A673 (cell line): ENCODE measurements at regions of chr20 and their contacts with region 1.

Region 1: DNA sequence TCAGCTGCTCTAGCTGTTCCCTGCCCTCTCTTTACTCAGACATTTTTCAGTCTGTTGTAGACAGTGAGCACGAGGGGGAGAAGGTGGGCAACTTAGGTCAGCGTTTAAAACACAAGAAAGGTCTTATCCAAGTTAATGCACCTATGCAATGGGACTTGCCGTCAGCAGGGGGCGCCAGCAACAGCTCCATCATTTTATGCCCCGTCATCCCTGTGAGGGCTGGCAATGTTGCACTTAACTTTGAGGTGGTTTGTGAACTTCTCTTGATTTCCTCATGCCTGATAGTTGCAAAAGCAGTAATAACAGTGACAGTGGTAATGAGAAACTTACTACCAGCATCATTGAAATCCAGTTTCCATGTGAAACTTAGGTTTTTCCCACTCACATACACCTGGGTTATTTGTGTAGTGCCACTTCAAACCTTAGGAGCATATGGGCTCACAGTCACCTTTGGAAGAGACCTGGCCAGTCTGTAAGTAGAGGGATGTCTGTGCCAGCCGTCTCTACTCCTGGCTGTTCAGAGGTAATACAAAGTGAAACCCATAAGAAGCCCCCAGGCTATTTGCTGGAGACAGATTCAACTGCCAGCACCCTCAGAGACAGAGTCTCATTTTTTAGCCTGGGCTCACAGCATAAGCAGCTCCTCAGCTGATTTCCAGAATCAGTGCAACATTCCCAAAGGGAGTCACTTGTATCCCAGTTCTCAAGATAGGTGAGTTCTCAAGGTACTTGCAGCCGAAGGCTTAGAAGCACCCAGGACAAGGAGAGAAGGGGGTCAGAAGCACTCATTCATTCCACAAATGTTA is 44.8 kb upstream of the ID1 start:
- DNase-seq: peak; percentile 87
- H3K4me3 ChIP-seq: no peak overlapping the region
- H3K27ac ChIP-seq: peak overlapping the region; percentile 76
- H3K4me1 ChIP-seq: peaks cover 6% of the 10 kb centered on the region
- H3K27me3 ChIP-seq: no peaks in the 10 kb centered on the region
- CTCF ChIP-seq: peak; percentile 99

Region 2: GRCh38 chr20:31523361-31524283 is 36.7 kb before region 1 on chr20:
- CTCF ChIA-PET with region 1: interaction called, 4 read pairs
- POLR2A ChIA-PET with region 1: interaction called, 13 read pairs
- intact Hi-C with region 1: no loop called
- DNase-seq: no peak
- H3K4me3 ChIP-seq: no peak overlapping the region
- H3K27ac ChIP-seq: no peak overlapping the region
- H3K4me1 ChIP-seq: no peaks in the 10 kb centered on the region
- H3K27me3 ChIP-seq: no peaks in the 10 kb centered on the region
- CTCF ChIP-seq: no peak

Region 3: DNA sequence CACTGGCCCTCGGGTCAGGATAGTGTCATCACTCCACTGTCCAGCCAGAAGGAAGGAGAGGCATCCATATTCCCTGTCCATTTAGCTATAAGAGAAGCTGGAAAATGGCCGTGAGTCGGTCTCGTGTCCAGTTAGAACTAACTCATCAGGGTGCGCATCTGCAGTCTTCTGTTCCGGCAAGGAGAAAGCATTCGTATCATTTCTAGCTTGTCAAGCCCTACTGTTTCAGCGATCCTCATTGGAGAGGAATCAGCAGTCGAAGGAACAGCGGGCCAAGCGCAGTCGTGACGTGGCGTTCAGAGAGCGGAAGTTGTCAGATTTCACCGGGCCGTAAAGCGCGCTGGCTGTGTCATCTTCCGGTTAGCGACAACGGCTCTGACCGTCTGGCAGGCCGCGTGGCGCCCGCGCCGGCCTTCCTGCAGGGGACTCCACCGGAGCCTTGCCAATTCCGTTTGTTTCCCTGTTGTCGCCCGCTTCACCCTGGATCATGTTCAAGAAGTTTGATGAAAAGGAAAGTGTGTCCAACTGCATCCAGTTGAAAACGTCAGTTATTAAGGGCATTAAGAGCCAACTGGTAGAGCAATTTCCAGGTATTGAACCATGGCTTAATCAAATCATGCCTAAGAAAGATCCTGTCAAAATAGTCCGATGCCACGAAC is 13.2 kb before region 1 on chr20:
- CTCF ChIA-PET with region 1: interaction called, 12 read pairs
- POLR2A ChIA-PET with region 1: no interaction called
- intact Hi-C with region 1: no loop called
- DNase-seq: peak; percentile 91
- H3K4me3 ChIP-seq: peak overlapping the region; percentile 60
- H3K27ac ChIP-seq: peak overlapping the region; percentile 91
- H3K4me1 ChIP-seq: peaks cover 4% of the 10 kb centered on the region
- H3K27me3 ChIP-seq: no peaks in the 10 kb centered on the region
- CTCF ChIP-seq: no peak

Region 4: DNA sequence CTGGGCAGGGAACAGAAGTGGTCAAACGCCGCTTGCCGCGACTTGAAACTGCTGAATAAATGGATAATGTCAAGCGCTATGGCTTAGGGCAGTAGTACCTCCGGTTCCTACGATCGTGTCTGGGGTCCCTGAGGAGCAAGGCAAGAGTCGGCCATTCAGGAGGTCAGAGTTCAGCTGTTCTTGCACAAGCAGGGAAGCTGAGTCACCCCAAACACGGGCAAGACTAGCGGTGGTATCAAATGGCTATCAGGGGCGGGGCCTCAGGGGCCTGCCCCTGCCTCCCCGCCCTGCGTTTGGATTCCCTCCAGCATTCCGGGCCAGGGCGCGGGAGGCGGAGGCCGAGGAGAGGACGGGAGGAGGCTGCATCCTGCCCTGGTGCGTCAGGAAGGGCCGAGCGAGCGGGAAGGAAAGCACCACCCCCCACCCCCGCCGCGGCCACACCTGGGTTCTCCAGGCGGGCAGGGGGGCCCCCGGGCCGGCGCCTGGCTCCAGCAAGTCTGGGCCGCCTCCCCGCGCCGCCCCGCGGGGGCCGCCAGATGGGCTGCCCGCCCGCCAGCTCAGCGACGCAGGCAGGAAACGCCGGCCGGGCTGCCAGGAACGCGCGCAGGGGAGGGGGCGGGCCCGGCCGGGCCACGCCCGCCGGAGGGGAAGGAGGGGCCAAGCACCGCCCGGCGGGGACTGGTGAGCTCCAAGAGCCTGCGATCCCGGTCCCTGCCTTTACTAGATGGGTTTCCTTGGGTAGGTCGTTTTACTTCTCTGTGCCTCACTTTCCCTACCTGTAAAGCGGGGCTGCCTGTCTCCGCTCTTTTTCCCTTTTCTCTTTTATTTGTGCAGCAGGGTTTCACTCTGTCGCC is 12.6 kb after region 1 on chr20:
- CTCF ChIA-PET with region 1: interaction called, 32 read pairs
- POLR2A ChIA-PET with region 1: interaction called, 3 read pairs
- intact Hi-C with region 1: no loop called
- DNase-seq: peak; percentile 97
- H3K4me3 ChIP-seq: peak overlapping the region; percentile 51
- H3K27ac ChIP-seq: peak overlapping the region; percentile 94
- H3K4me1 ChIP-seq: peaks cover 20% of the 10 kb centered on the region
- H3K27me3 ChIP-seq: no peaks in the 10 kb centered on the region
- CTCF ChIP-seq: no peak